Ovary (tissue), 10 donors: ENCODE measurements at regions of chr17 and their contacts with region 1.

Region 1: GRCh38 chr17:78341559-78342448 is 18.1 kb downstream of the SOCS3 start:
- DNase-seq: peak; percentile 79 to 90 (median 87)
- H3K4me3 ChIP-seq: peak overlapping the region; percentile 42
- H3K27ac ChIP-seq: peak overlapping the region; percentile 69 to 87
- H3K4me1 ChIP-seq: peaks cover 8% of the 10 kb centered on the region
- H3K27me3 ChIP-seq: no peaks in the 10 kb centered on the region
- CTCF ChIP-seq: peak in 1 of 3 donors; percentile 25
- EP300 ChIP-seq: peak; percentile 27
- POLR2A ChIP-seq: peak; percentile 45

Region 2: DNA sequence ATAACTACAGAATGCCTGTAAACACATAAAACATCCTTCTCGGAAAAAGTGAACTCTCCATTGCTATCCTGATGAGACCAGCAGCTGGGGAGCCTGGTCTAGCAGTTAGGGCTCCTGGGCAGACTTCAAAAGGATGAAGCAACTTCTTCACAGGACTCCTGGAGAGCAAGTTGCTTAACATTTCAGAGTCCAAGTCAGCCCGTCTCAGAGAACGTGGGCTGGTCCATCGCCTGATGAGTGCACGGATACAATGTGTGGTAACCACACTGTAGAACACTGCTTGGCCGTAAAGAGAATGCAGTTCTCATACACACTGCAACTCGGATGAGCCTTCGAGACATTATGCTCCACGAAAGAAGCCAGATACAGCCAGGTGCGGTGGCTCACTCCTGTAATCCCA is 57.7 kb before region 1 on chr17:
- intact Hi-C with region 1: no loop called
- DNase-seq: no peak
- H3K4me3 ChIP-seq: no peak overlapping the region
- H3K27ac ChIP-seq: no peak overlapping the region
- H3K4me1 ChIP-seq: no peaks in the 10 kb centered on the region
- H3K27me3 ChIP-seq: no peaks in the 10 kb centered on the region
- CTCF ChIP-seq: no peak
- EP300 ChIP-seq: no peak
- POLR2A ChIP-seq: no peak

Region 3: DNA sequence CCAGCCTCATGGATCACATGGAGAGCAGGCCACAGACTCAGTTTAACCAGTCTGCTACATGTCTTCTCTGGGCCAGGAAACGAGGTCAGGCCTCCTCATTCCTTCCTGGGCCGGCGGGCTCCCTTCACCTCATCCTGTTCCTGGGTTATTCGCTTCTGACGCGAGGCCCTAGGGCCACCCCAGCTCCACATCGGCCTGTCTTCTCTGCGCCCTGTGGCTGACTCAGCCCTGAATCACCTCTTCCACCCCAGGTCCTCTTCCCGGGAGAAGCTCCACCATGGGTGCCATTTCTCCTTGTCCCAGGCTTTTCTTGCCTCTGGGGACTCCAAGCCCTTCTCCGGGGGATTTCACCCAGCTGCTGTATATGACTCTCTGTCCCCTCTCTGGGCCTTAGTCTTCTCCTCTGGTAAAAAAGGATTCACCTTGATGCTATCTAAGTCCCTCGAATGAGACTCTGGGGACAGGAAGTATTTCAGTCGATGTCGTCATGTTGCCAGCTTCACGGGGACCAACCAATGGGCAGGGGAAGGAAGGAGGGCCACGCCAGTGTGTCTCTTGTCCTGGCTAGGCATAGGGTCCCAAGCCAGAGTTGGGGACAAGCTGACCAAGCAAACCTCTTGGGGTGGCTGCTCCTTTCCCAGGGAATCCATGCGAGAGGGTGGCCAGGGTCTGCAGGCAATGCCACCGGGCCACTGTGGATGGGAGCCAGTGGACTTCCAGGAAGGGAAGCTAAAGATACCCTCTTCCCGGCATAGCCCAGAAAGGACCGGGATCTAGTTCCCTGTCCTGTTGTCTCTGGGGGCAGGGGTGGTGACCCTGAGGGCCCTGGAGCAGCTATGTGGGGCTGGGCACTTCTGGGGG is 40.6 kb before region 1 on chr17:
- intact Hi-C with region 1: no loop called
- DNase-seq: no peak
- H3K4me3 ChIP-seq: no peak overlapping the region
- H3K27ac ChIP-seq: no peak overlapping the region
- H3K4me1 ChIP-seq: peaks cover 2% of the 10 kb centered on the region
- H3K27me3 ChIP-seq: no peaks in the 10 kb centered on the region
- CTCF ChIP-seq: no peak
- EP300 ChIP-seq: no peak
- POLR2A ChIP-seq: no peak

Region 4: DNA sequence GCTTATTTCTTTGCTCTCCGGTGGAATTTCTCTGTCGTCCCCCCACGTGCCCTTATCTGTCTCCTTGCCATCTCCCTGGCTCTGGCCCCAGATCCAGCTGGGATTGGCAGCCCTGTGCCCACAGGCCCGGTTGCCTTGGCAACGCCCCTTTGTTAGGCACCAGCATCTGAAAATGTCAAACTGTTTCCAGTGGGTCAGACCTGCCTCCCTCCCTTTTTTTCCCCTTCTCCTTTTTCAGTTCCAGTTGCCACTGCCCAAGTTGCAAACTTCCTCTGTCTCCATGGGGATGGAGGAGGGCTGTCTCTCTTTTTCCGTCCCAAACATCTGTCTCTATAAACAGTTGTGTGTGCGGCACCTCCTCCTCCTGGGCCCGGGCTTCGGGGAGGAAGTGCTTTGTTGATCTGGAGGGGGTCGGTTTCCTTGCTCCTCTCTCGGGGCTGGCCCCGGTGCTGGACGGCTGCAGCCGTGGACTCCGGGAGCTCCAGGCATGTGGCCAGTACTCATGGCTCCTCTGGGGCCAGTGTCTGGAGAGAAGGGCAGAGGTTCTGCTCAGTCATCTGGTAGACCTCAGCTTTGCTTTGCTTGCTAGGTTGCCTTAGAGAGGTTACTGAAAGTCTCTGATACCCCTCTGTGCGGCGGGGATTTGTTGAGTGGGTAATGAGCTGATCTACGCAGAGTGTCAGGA is 17.3 kb before region 1 on chr17:
- intact Hi-C with region 1: loop called in 1 of 4 experiments (anchors 2 kb)
- DNase-seq: peak; percentile 80 to 89 (median 85)
- H3K4me3 ChIP-seq: peak overlapping the region; percentile 1
- H3K27ac ChIP-seq: peak overlapping the region; percentile 23 to 80
- H3K4me1 ChIP-seq: peaks cover 7% of the 10 kb centered on the region
- H3K27me3 ChIP-seq: no peaks in the 10 kb centered on the region
- CTCF ChIP-seq: no peak
- EP300 ChIP-seq: peak; percentile 9
- POLR2A ChIP-seq: peak; percentile 46